ENCODE measurements at regions of chr1 and their contacts with region 1.

Region 1: DNA sequence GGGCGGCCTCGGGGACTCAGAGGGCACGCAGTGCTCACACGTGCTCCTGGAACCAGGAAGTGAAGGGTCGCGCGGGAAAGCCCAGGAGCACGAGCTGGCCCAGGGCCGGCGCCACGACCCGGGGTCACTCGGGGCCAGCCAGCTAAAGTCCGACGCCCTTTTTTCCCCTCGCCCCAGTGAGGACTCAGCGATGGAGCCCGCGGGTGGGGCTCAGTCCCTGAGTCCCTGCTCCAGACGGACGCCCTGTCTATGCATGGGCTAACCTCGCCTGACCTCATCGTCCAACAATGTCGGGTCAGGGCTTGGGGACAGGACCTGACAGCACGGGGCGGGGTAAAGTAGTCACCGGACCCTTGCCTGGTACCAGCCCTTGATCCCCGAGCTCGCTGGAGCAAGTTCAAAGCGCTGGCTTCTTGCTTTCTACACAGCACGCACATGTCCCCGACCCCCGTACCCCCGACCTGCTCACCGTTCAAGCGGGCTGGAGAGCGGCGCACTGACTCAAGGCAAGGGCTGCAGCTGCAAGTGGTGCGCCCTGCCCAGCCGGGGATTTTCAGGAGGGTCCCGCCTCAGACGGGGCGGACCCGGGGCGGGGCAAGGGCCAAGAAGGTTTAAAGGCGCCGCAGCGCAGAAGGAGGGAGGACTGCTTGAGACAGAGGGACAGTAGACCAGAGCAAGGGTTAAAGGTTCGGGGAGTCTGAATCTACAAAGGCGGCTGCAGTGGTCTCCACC is at the start of gene TAGLN2:
- DNase-seq: peak; percentile 90
- ATAC-seq: peak; percentile 66
- H3K4me3 Mint-ChIP-seq: peak within 1 kb of the TSS; percentile 90
- H3K27ac Mint-ChIP-seq: peak within 1 kb of the TSS; percentile 96
- H3K4me1 Mint-ChIP-seq: peaks cover 43% of the 10 kb centered on the region
- H3K27me3 Mint-ChIP-seq: no peaks in the 10 kb centered on the region
- total RNA-seq, gene TAGLN2: 476 to 510 TPM

Region 2: DNA sequence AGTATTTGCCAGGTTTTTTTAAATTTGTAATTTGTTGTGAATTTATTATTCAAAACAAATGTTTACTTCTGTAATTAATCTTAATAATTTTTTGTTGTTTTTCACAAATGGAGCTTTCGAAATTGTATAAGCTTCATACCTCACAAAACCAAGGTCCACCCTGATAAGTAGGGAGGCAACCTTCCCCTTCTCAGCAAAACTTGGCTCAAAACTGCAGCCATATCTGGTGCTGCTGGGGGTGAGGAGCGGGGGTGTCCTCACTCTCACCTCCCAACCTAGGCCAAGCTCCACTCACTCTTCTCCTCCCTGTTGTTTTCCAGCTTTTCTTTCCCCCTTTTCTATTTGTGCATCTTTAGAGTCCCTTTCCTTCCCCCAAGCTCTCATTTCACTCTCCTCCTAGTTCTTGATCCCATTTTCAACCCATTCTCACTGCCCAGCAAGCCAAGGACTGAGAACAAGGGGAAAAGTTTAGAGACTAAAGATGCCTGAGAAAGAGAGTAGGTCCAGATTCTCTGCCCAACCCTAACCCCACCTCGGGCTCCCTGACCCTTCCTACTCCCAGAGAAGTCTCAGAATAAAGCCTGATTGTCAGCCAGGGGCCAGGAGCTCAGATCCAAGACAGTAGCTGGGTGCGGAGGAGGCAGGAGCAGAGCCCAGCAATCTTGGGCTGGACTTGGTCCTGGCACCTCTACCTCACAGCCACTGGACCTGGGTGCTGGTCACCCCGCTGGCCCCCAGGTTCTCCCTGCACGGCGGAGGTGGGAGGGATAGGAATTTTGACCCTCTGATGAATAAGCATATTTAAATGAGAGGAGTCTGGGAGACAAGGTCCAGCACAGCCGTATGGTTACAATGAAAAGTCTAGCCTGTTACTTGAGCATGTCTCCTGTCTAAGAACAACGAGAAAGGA is 16.9 kb before region 1 on chr1:
- CTCF ChIA-PET with region 1: no interaction called
- POLR2A ChIA-PET with region 1: interaction called, 10 read pairs
- DNase-seq: no peak
- ATAC-seq: no peak
- H3K4me3 Mint-ChIP-seq: no peak overlapping the region
- H3K27ac Mint-ChIP-seq: no peak overlapping the region
- H3K4me1 Mint-ChIP-seq: peaks cover 53% of the 10 kb centered on the region
- H3K27me3 Mint-ChIP-seq: no peaks in the 10 kb centered on the region

Region 3: DNA sequence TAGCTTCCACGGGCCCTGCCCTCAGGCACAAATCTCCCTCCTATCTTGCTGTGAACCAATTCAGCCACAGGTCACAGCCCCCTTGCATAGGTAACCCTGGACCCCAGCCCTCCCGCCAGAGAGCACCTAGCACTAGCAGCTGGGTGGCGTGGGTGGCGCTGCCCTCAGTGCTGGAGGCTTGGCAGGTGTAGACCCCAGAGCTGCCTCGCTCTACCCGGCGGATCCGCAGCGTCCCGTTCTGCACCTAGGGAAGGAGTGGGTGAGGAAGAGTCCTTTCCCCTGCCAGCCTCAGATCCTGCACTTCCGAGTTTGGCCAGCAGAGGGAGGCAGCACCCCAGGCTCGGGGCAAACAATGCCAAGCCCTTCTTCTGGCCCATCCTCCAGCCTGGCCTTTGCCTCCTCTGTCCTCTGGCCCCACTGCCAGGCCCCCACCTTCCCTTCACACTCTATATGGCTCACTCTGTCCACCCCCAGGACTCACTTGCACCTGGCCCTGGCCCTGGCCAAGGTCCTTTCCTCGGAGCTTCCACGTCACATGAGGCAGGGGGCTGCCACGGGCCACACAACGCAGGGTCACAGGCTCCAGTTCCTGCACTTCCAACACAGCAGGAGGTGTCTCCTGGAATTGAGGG is 11.2 kb after region 1 on chr1:
- CTCF ChIA-PET with region 1: interaction called, 23 read pairs
- POLR2A ChIA-PET with region 1: interaction called, 21 read pairs
- DNase-seq: peak; percentile 83
- ATAC-seq: peak; percentile 81
- H3K4me3 Mint-ChIP-seq: no peak overlapping the region
- H3K27ac Mint-ChIP-seq: no peak overlapping the region
- H3K4me1 Mint-ChIP-seq: peaks cover 5% of the 10 kb centered on the region
- H3K27me3 Mint-ChIP-seq: peaks cover 29% of the 10 kb centered on the region

Region 4: DNA sequence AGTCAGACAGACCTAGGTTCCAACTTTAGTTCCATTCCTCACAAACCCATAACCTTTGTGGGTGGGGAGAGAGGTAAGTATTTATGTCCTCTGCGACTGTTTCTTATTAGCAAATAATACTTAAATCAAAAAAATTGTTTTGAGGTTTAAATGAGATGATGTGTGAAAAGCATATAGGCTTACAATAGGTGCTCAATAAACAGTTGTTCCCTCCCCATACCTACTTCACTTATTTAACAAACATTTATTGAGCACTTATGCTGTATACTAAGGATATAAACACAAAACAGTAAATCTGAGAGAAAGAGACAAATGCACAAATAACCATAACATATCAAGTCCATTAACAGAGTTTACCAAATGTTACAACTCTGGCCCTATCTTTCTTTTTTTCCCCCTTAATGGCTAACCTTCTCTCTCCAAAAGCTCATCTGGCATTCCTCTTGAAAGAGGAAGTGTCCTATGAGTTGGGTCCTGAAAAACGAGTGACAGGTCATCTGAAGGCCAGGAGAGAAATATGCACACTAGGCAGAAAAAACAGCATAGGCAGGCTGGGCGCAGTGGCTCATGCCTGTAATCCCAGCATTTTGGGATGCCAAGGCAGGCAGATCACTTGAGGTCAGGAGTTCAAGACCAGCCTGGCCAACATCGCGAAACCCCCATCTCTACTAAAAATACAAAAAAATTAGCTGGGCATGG is 96.4 kb after region 1 on chr1:
- CTCF ChIA-PET with region 1: no interaction called
- POLR2A ChIA-PET with region 1: no interaction called
- DNase-seq: no peak
- ATAC-seq: no peak
- H3K4me3 Mint-ChIP-seq: no peak overlapping the region
- H3K27ac Mint-ChIP-seq: no peak overlapping the region
- H3K4me1 Mint-ChIP-seq: peaks cover 5% of the 10 kb centered on the region
- H3K27me3 Mint-ChIP-seq: peaks cover 12% of the 10 kb centered on the region

Region 5: DNA sequence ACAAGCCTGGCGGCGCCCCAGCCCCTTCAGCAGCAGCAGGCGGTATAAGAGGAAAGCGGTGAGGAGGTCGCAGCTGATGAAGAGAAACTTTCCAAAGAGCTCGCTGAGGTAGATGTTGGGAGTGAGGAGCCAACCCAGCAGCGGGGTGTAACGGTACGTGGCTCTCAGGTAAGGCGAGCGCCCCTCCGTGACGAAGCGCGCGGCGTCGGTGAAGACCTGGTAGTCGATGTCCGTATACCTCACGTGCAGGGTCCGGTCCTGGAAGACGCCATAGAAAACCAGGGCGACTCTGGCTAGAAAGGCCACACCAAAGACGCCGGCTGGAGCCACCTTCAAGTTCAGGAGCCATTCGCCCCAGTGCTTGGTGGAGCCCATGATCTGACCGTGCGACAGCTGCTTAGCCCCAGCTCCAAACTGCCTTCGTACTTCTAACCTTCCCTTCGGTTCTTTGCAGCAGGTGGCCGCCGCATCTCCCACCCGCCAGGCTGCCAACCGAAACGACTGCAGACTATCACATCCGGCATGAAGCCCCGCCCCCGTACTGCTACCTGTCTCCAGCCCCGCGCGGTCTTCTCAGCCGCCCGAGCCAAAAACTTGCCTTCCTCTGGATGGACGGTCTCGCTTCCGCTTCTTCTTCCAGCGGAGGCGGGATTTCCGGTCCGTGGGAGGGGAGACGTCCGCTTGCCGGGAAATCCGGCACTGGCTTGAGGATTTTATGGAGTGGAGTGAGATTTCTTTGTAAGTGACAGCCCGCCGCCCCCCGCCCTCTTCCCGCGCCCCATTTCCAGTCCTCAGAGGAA is 106.4 kb after region 1 on chr1 and contains the start of gene PIGM:
- CTCF ChIA-PET with region 1: interaction called, 5 read pairs
- POLR2A ChIA-PET with region 1: interaction called, 14 read pairs
- DNase-seq: peak; percentile 97
- ATAC-seq: peak; percentile 99
- H3K4me3 Mint-ChIP-seq: peak within 1 kb of the TSS; percentile 95
- H3K27ac Mint-ChIP-seq: peak within 1 kb of the TSS; percentile 90
- H3K4me1 Mint-ChIP-seq: peaks cover 29% of the 10 kb centered on the region
- H3K27me3 Mint-ChIP-seq: peaks cover 12% of the 10 kb centered on the region
- total RNA-seq, gene PIGM: 4.2 to 4.5 TPM

Measured in activated CD8-positive, alpha-beta T cell treated with anti-CD3 and anti-CD28 coated beads, Interleukin-2, amount 10 ng/mL, durations not matched to agents 7 days and 5 days (primary cell).